ENCODE measurements at regions of chr4 and their contacts with region 1.

Region 1: GRCh38 chr4:3480528-3481112 is 17.5 kb downstream of the DOK7 start:
- DNase-seq: peak; percentile 78
- H3K4me3 ChIP-seq: no peak overlapping the region
- H3K27ac ChIP-seq: no peak overlapping the region
- H3K4me1 ChIP-seq: no peaks in the 10 kb centered on the region
- H3K27me3 ChIP-seq: peaks cover 2 to 14% of the 10 kb centered on the region in 2 experiments
- CTCF ChIP-seq: peak; percentile 98 to 100
- POLR2A ChIP-seq: no peak

Region 2: GRCh38 chr4:3047464-3048286 is 432.9 kb before region 1 on chr4:
- CTCF ChIA-PET with region 1: interaction called, 15 read pairs
- POLR2A ChIA-PET with region 1: no interaction called
- dilution Hi-C with region 1: no loop called
- intact Hi-C with region 1: loop called (anchors 1 kb)
- DNase-seq: peak; percentile 51
- H3K4me3 ChIP-seq: no peak overlapping the region
- H3K27ac ChIP-seq: no peak overlapping the region
- H3K4me1 ChIP-seq: no peaks in the 10 kb centered on the region
- H3K27me3 ChIP-seq: no peaks in the 10 kb centered on the region
- CTCF ChIP-seq: peak; percentile 52 to 79
- POLR2A ChIP-seq: no peak

Region 3: DNA sequence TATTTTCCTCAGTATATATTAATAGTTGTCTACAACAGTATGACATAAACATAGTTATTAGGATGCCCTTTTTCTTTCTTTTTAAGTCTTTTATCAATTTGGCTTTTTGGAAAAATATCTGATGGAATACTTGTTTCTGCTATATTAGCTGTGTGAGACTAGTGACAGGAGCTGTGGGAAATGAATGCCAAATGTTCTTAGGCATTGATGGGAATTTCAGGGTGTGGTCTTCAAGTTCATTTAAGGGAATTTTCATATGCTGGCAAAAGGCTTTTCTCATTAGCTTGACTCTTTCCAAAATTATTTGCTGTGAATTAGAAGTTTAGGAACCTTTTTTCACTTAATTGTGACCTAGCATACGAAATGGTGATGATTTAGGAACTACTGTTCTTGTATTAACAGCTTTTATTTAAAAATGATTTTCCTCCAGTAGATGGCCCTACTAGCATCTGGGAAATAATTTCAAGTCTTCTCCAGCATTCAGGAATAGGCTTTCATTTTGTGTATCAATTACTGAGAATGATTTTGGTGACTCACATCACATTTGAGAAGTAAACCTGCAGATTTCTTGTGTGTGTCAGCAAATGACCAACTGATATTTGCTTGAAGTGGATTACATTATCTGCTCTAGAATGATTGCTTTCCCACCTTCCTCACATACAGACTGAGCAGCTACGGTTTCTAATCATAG is 335.2 kb before region 1 on chr4:
- CTCF ChIA-PET with region 1: interaction called, 22 read pairs
- POLR2A ChIA-PET with region 1: no interaction called
- dilution Hi-C with region 1: no loop called
- intact Hi-C with region 1: no loop called
- DNase-seq: peak; percentile 25
- H3K4me3 ChIP-seq: no peak overlapping the region
- H3K27ac ChIP-seq: no peak overlapping the region
- H3K4me1 ChIP-seq: no peaks in the 10 kb centered on the region
- H3K27me3 ChIP-seq: no peaks in the 10 kb centered on the region
- CTCF ChIP-seq: no peak
- POLR2A ChIP-seq: no peak

Region 4: GRCh38 chr4:3452376-3452775 is 28.2 kb before region 1 on chr4:
- CTCF ChIA-PET with region 1: interaction called, 13 read pairs
- POLR2A ChIA-PET with region 1: no interaction called
- dilution Hi-C with region 1: no loop called
- intact Hi-C with region 1: no loop called
- DNase-seq: no peak
- H3K4me3 ChIP-seq: no peak overlapping the region
- H3K27ac ChIP-seq: no peak overlapping the region
- H3K4me1 ChIP-seq: peaks cover 4% of the 10 kb centered on the region
- H3K27me3 ChIP-seq: peaks cover 0 to 2% of the 10 kb centered on the region in 2 experiments
- CTCF ChIP-seq: peak; percentile 38 to 59
- POLR2A ChIP-seq: no peak

Region 5: GRCh38 chr4:3491681-3492405 is 11.2 kb after region 1 on chr4:
- CTCF ChIA-PET with region 1: interaction called, 15 read pairs
- POLR2A ChIA-PET with region 1: no interaction called
- dilution Hi-C with region 1: no loop called
- intact Hi-C with region 1: no loop called
- DNase-seq: no peak
- H3K4me3 ChIP-seq: no peak overlapping the region
- H3K27ac ChIP-seq: no peak overlapping the region
- H3K4me1 ChIP-seq: no peaks in the 10 kb centered on the region
- H3K27me3 ChIP-seq: peaks cover 2 to 7% of the 10 kb centered on the region in 2 experiments
- CTCF ChIP-seq: no peak
- POLR2A ChIP-seq: no peak

Region 6: DNA sequence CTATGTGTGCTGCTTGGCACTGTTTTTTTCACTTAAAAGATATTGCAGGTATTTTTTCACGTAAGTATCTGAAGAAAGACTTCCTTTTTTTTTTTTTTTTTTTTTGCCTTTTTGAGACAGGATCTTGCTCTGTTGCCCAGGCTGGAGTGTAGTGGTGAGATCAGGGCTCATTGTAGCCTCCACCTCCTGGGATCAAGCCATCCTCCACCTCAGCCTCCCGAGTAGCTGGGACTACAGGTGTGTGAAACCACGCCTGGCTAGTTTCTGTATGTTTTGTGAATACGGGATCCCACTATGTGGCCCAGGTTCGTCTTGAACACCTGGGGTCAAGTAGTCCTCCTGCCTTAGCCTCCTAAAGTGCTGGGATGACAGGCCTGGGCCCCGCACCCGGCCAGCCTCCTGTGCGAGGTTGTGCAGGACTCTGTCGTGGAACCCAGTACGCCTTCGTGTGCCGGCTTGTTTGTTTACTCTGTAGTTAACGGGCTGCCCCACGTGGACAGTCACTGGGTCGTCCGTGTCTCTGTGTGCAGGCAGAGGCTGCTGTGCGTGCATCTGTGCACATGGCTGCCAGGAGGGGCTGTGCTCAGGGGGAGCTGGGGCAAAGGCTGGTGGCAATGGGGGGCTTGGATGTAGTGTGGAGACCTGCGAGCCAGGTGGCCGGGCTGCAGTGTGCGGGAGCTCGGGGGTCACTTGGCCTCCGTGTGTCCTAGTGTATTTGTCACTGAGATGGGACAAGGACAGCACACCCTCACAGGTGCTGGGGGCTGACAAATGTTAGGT is 465.1 kb after region 1 on chr4:
- CTCF ChIA-PET with region 1: interaction called, 3 read pairs
- POLR2A ChIA-PET with region 1: no interaction called
- dilution Hi-C with region 1: no loop called
- intact Hi-C with region 1: loop called (anchors 10 kb)
- DNase-seq: no peak
- H3K4me3 ChIP-seq: no peak overlapping the region
- H3K27ac ChIP-seq: no peak overlapping the region
- H3K4me1 ChIP-seq: no peaks in the 10 kb centered on the region
- H3K27me3 ChIP-seq: no peaks in the 10 kb centered on the region
- CTCF ChIP-seq: no peak
- POLR2A ChIP-seq: no peak